ENCODE measurements at regions of chr10 and their contacts with region 1.

Region 1: GRCh38 chr10:22003079-22003913 is at the start of gene DNAJC1:
- DNase-seq: peak; percentile 99
- H3K4me3 Mint-ChIP-seq: peak within 1 kb of the TSS; percentile 87
- H3K27ac Mint-ChIP-seq: peak within 1 kb of the TSS; percentile 81
- H3K4me1 Mint-ChIP-seq: peaks cover 37% of the 10 kb centered on the region
- H3K27me3 Mint-ChIP-seq: peaks cover 6% of the 10 kb centered on the region
- total RNA-seq, gene DNAJC1: 24.0 to 24.8 TPM

Region 2: GRCh38 chr10:21989453-21990154 is 13.7 kb before region 1 on chr10:
- CTCF ChIA-PET with region 1: interaction called, 41 read pairs
- POLR2A ChIA-PET with region 1: no interaction called
- intact Hi-C with region 1: no loop called
- DNase-seq: peak; percentile 44
- H3K4me3 Mint-ChIP-seq: no peak overlapping the region
- H3K27ac Mint-ChIP-seq: no peak overlapping the region
- H3K4me1 Mint-ChIP-seq: peaks cover 11% of the 10 kb centered on the region
- H3K27me3 Mint-ChIP-seq: no peaks in the 10 kb centered on the region

Region 3: DNA sequence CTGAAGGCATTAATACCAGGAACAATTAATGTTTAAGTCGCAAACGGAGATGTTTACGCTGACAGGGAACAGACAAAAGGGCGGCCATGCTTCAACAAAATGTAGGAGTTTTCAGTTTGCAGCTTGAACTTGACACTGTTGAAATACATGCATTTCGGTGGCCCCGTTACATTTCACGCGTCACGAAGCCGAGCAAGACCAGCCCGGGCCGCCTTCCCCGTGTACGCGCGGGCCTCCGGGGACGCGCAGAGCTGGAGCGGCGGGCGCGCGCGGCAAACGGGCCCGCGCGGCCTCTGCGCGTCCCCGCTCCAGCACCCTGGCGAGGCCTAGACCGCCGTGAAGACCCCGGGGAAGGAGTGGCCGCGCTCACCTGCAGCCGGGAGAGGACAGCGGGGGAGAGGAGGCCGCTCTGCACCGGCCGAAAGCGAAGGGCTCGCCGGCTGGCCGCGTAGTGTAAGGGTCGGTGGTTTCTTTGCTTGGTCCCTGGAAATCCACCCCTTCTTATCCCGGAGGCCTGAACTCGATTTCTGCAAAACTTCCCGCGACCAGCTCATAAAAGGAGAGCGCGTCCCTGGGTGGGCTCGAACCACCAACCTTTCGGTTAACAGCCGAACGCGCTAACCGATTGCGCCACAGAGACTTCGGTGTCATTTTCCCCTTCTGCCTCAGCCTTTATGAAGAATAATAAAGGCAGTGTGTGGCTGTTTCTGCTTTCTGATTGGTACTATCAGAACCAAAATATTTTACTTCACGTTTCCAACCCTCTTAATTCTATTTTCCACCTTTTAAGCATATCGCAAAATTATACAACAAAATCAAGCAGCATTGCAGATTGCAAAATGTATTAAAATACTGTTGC is 225.9 kb after region 1 on chr10:
- CTCF ChIA-PET with region 1: no interaction called
- POLR2A ChIA-PET with region 1: interaction called, 6 read pairs
- intact Hi-C with region 1: loop called (anchors 1 kb)
- DNase-seq: peak; percentile 90
- H3K4me3 Mint-ChIP-seq: peak overlapping the region; percentile 77
- H3K27ac Mint-ChIP-seq: peak overlapping the region; percentile 96
- H3K4me1 Mint-ChIP-seq: peaks cover 16% of the 10 kb centered on the region
- H3K27me3 Mint-ChIP-seq: peaks cover 4% of the 10 kb centered on the region

Region 4: GRCh38 chr10:22316285-22317120 is 313.2 kb after region 1 on chr10 and contains the start of gene COMMD3:
- CTCF ChIA-PET with region 1: no interaction called
- POLR2A ChIA-PET with region 1: interaction called, 12 read pairs
- intact Hi-C with region 1: loop called (anchors 2 kb)
- DNase-seq: peak; percentile 87
- H3K4me3 Mint-ChIP-seq: peak within 1 kb of the TSS; percentile 92
- H3K27ac Mint-ChIP-seq: peak within 1 kb of the TSS; percentile 92
- H3K4me1 Mint-ChIP-seq: peaks cover 37% of the 10 kb centered on the region
- H3K27me3 Mint-ChIP-seq: peaks cover 4% of the 10 kb centered on the region
- total RNA-seq, gene COMMD3: 84.6 to 91.4 TPM

Region 5: GRCh38 chr10:22436884-22437619 is 433.8 kb after region 1 on chr10:
- CTCF ChIA-PET with region 1: interaction called, 4 read pairs
- POLR2A ChIA-PET with region 1: interaction called, 6 read pairs
- intact Hi-C with region 1: loop called (anchors 2 kb)
- DNase-seq: peak; percentile 89
- H3K4me3 Mint-ChIP-seq: peak overlapping the region; percentile 88
- H3K27ac Mint-ChIP-seq: peak overlapping the region; percentile 91
- H3K4me1 Mint-ChIP-seq: peaks cover 50% of the 10 kb centered on the region
- H3K27me3 Mint-ChIP-seq: no peaks in the 10 kb centered on the region

Region 6: DNA sequence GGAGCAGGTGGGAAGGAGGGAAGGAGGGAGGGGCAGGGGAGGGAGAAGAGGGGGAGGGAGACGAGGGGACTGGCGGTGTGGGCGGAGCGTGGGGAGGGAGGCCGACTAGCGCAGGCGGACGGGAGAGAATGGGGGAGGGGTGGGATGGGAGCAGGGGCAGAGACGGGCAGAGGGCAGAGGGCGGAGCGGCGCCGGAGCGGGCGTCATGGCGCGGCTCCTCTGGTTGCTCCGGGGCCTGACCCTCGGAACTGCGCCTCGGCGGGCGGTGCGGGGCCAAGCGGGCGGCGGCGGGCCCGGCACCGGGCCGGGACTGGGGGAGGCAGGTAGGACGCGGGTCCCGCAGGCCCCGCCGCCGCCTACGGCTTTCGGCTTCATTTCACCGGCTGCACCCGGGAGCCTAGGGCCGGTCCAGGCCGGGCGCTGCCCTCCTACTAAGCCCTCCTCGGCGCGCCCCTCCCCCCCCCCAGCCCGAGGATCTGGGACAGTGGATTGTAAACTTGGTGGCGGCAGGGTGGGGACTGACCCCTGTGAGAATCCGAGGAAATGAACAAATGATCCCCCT is 1092.2 kb after region 1 on chr10 and contains the start of gene MSRB2:
- CTCF ChIA-PET with region 1: no interaction called
- POLR2A ChIA-PET with region 1: no interaction called
- intact Hi-C with region 1: loop called (anchors 10 kb)
- DNase-seq: peak; percentile 87
- H3K4me3 Mint-ChIP-seq: peak within 1 kb of the TSS; percentile 94
- H3K27ac Mint-ChIP-seq: peak within 1 kb of the TSS; percentile 88
- H3K4me1 Mint-ChIP-seq: peaks cover 38% of the 10 kb centered on the region
- H3K27me3 Mint-ChIP-seq: no peaks in the 10 kb centered on the region
- total RNA-seq, gene MSRB2: 9.4 to 11.1 TPM